Activated T-helper 1 cell treated with anti-CD3 and anti-CD28 coated beads, Interleukin-12 subunit alpha, Interleukin-12 subunit beta, Interleukin-2, Interleukin-4 antibody, amounts not matched to agents 30 ng/mL and 10 ng/mL and 1 ng/mL, durations not matched to agents 14 hours and 24 hours and 36 hours (primary cell): ENCODE measurements at regions of chr11 and their contacts with region 1.

Region 1: GRCh38 chr11:17978553-17979287 is 34.1 kb downstream of the SERGEF start:
- DNase-seq: no peak
- H3K4me3 Mint-ChIP-seq: no peak overlapping the region
- H3K27ac Mint-ChIP-seq: no peak overlapping the region
- H3K4me1 Mint-ChIP-seq: no peaks in the 10 kb centered on the region
- H3K27me3 Mint-ChIP-seq: no peaks in the 10 kb centered on the region

Region 2: GRCh38 chr11:17598700-17599459 is 379.8 kb before region 1 on chr11:
- intact Hi-C with region 1: loop called (anchors 1 kb)
- DNase-seq: peak; percentile 44
- H3K4me3 Mint-ChIP-seq: no peak overlapping the region
- H3K27ac Mint-ChIP-seq: no peak overlapping the region
- H3K4me1 Mint-ChIP-seq: peaks cover 16% of the 10 kb centered on the region
- H3K27me3 Mint-ChIP-seq: peaks cover 6% of the 10 kb centered on the region

Region 3: GRCh38 chr11:17730608-17731462 is 247.9 kb before region 1 on chr11:
- intact Hi-C with region 1: loop called (anchors 1 kb)
- DNase-seq: peak; percentile 48
- H3K4me3 Mint-ChIP-seq: no peak overlapping the region
- H3K27ac Mint-ChIP-seq: no peak overlapping the region
- H3K4me1 Mint-ChIP-seq: no peaks in the 10 kb centered on the region
- H3K27me3 Mint-ChIP-seq: peaks cover 49% of the 10 kb centered on the region

Region 4: GRCh38 chr11:17760102-17761029 is 218.4 kb before region 1 on chr11:
- intact Hi-C with region 1: loop called (anchors 1 kb)
- DNase-seq: no peak
- H3K4me3 Mint-ChIP-seq: no peak overlapping the region
- H3K27ac Mint-ChIP-seq: no peak overlapping the region
- H3K4me1 Mint-ChIP-seq: no peaks in the 10 kb centered on the region
- H3K27me3 Mint-ChIP-seq: no peaks in the 10 kb centered on the region

Region 5: DNA sequence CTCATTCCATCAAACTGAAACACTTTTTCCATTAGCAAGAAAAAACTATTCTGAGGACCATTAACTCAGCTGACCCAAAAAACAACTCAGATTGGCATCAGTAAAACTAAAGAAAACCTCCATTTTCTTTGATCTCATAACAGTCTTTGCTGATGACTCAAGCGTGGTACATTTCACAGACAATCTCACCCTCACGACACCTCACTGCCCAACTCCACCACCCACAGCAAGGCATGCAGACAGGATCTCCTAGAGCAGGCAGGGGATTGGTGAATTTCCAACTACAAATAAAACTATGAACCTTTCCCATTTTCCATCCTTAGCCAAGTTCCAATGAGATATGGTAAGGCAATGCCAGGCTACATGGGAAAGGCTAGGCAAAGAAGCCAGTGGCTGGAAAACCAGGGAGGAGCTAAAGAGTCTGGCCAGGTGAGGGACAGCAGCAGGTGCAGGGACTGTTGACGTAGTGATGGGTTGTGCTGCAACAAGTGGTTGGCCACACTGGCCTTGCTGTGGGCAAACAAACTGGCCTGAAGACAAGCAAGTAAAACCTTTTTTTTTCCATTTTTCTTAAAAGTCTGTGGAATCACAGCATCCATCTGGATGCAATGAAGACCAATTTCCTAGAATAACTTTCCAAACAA is 63.1 kb before region 1 on chr11:
- intact Hi-C with region 1: no loop called
- DNase-seq: no peak
- H3K4me3 Mint-ChIP-seq: no peak overlapping the region
- H3K27ac Mint-ChIP-seq: no peak overlapping the region
- H3K4me1 Mint-ChIP-seq: no peaks in the 10 kb centered on the region
- H3K27me3 Mint-ChIP-seq: no peaks in the 10 kb centered on the region